Posterior vena cava (tissue), 2 donors: ENCODE measurements at regions of chrX and their contacts with region 1.

Region 1: GRCh38 chrX:41119803-41120202 is 34.6 kb downstream of the USP9X start:
- DNase-seq: no peak

Region 2: DNA sequence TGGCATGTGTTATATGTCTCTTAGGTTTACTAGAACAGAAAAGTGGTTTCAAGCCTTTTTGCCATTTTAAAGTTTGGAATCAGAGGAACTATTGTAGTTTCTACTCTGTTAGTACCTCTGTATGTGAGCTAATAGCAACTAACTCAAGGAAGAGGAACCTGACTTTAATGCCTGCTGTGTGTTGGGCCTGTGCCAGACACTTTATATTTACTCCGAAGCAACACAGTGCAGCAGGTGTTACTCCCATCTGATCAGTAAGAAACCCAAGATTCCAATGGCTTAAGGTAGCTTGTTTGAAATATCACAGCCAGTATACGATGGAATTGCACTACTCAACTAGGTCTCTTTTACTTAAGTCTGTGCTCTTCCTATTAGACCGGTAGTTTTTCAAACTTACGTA is 44.6 kb after region 1 on chrX:
- intact Hi-C with region 1: loop called in 1 of 2 experiments (anchors 2 kb)
- DNase-seq: no peak